Ascending aorta (tissue), 2 donors: ENCODE measurements at regions of chr15 and their contacts with region 1.

Region 1: GRCh38 chr15:49235446-49236124 is 65.5 kb downstream of the GALK2 start:
- DNase-seq: peak in 1 of 2 donors; percentile 70
- H3K4me3 ChIP-seq: no peak overlapping the region
- H3K27ac ChIP-seq: no peak overlapping the region
- H3K4me1 ChIP-seq: peaks cover 5 to 8% of the 10 kb centered on the region in 2 donors
- H3K27me3 ChIP-seq: no peaks in the 10 kb centered on the region
- CTCF ChIP-seq: peak; percentile 77 to 82 (median 78)

Region 2: GRCh38 chr15:49122541-49123062 is 113.0 kb before region 1 on chr15:
- intact Hi-C with region 1: no loop called
- DNase-seq: no peak
- H3K4me3 ChIP-seq: no peak overlapping the region
- H3K27ac ChIP-seq: no peak overlapping the region
- H3K4me1 ChIP-seq: no peaks in the 10 kb centered on the region
- H3K27me3 ChIP-seq: no peaks in the 10 kb centered on the region
- CTCF ChIP-seq: no peak

Region 3: GRCh38 chr15:49421991-49422390 is 186.4 kb after region 1 on chr15:
- intact Hi-C with region 1: loop called (anchors 2 kb)
- DNase-seq: no peak
- H3K4me3 ChIP-seq: peak overlapping the region; percentile 24 to 38
- H3K27ac ChIP-seq: no peak overlapping the region
- H3K4me1 ChIP-seq: no peaks in the 10 kb centered on the region
- H3K27me3 ChIP-seq: no peaks in the 10 kb centered on the region
- CTCF ChIP-seq: peak; percentile 64 to 81 (median 68)

Region 4: GRCh38 chr15:49876401-49877038 is 640.9 kb after region 1 on chr15:
- intact Hi-C with region 1: loop called (anchors 10 kb)
- DNase-seq: no peak
- H3K4me3 ChIP-seq: no peak overlapping the region
- H3K27ac ChIP-seq: peak overlapping the region; percentile 88 to 90
- H3K4me1 ChIP-seq: peaks cover 13 to 22% of the 10 kb centered on the region in 2 donors
- H3K27me3 ChIP-seq: no peaks in the 10 kb centered on the region
- CTCF ChIP-seq: peak; percentile 15 to 38 (median 33)

Region 5: GRCh38 chr15:50051803-50052419 is 816.3 kb after region 1 on chr15:
- intact Hi-C with region 1: loop called (anchors 2 kb)
- DNase-seq: peak in 1 of 2 donors; percentile 76
- H3K4me3 ChIP-seq: no peak overlapping the region
- H3K27ac ChIP-seq: no peak overlapping the region
- H3K4me1 ChIP-seq: peaks cover 0 to 11% of the 10 kb centered on the region in 2 donors
- H3K27me3 ChIP-seq: no peaks in the 10 kb centered on the region
- CTCF ChIP-seq: peak; percentile 49 to 73 (median 59)

Region 6: GRCh38 chr15:50330921-50331320 is 1095.3 kb after region 1 on chr15:
- intact Hi-C with region 1: loop called (anchors 5 kb)
- DNase-seq: no peak
- H3K4me3 ChIP-seq: no peak overlapping the region
- H3K27ac ChIP-seq: no peak overlapping the region
- H3K4me1 ChIP-seq: no peaks in the 10 kb centered on the region
- H3K27me3 ChIP-seq: no peaks in the 10 kb centered on the region
- CTCF ChIP-seq: no peak